Panc1 (cell line): ENCODE measurements at regions of chr5 and their contacts with region 1.

Region 1: GRCh38 chr5:103139264-103139865 is 19.3 kb downstream of the PPIP5K2 start:
- DNase-seq: peak; percentile 39
- ATAC-seq: peak; percentile 98
- H3K4me3 ChIP-seq: no peak overlapping the region
- H3K27ac ChIP-seq: no peak overlapping the region
- H3K4me1 ChIP-seq: no peaks in the 10 kb centered on the region
- H3K27me3 ChIP-seq: no peaks in the 10 kb centered on the region
- CTCF ChIP-seq: peak; percentile 89

Region 2: GRCh38 chr5:102583276-102584124 is 555.9 kb before region 1 on chr5:
- CTCF ChIA-PET with region 1: no interaction called
- POLR2A ChIA-PET with region 1: no interaction called
- in situ Hi-C with region 1: no loop called
- intact Hi-C with region 1: loop called (anchors 10 kb)
- DNase-seq: no peak
- ATAC-seq: no peak
- H3K4me3 ChIP-seq: no peak overlapping the region
- H3K27ac ChIP-seq: no peak overlapping the region
- H3K4me1 ChIP-seq: no peaks in the 10 kb centered on the region
- H3K27me3 ChIP-seq: no peaks in the 10 kb centered on the region
- CTCF ChIP-seq: peak; percentile 45; the same call in 1 of the 2 replicates

Region 3: DNA sequence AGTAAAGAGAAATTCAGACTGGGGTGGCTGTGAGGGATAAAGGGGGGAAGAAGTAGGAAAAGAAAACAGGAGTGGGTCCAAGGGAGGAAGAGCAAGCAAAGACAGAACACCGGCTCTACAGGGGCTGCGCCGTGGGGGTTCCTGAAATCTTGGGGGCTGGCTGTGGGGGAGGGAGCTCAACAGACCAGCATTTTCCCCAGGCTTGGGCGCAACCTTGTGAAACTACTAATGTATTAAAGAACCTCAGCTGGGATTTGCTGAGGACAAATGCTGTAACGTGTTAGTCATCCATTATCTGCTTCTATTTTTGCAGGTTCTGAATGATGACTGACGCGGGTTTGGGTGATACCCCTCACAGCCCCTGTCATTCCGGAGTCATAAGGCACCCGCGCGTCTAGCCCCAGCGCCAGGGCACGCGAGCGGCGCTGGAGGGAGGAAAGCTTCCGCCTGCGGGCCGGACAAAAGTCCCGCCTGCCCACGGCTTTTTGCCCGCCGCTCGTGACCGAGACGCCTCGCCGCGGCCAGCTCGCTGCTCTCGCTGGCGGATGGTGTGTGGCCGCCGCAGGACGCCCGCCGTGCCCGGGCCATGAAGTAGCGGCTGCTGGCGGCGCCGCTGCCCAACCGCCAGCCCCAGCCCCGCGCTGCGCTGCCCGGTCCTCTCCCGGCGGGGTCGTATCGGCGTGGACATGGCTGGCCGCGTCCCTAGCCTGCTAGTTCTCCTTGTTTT is 273.7 kb before region 1 on chr5:
- CTCF ChIA-PET with region 1: no interaction called
- POLR2A ChIA-PET with region 1: no interaction called
- in situ Hi-C with region 1: no loop called
- intact Hi-C with region 1: loop called (anchors 5 kb)
- DNase-seq: no peak
- ATAC-seq: peak; percentile 93
- H3K4me3 ChIP-seq: peak overlapping the region; percentile 76 to 87
- H3K27ac ChIP-seq: peak overlapping the region; percentile 90
- H3K4me1 ChIP-seq: peaks cover 22% of the 10 kb centered on the region
- H3K27me3 ChIP-seq: no peaks in the 10 kb centered on the region
- CTCF ChIP-seq: no peak

Region 4: DNA sequence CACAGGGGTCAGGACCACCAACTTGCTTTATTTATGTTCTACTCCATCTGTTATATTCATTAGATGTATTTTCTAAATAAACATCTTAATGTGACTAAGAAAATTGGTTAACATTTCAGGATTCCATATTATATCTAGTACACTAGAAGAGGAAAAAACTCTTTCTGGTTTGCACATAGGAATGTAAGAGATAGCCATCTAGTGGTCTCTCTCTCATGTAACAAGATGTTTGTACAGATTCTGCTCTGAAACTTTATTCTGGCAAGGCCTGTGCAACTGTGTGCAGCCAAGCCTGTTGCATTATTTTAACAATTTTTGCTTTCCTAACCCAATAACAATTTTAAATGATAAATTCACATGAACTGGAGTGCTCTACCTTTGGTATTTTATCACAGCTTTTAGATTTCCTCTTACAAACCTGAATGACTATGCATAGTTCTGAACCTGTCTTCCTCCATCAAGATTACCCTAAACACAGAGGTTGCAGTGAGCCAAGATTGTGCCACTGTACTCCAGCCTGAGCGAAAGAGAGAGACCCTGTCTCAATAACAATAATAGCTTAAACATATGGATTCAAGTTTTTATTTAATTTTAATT is 167.6 kb before region 1 on chr5:
- CTCF ChIA-PET with region 1: no interaction called
- POLR2A ChIA-PET with region 1: no interaction called
- in situ Hi-C with region 1: no loop called
- intact Hi-C with region 1: loop called (anchors 10 kb)
- DNase-seq: no peak
- ATAC-seq: peak; percentile 90
- H3K4me3 ChIP-seq: no peak overlapping the region
- H3K27ac ChIP-seq: no peak overlapping the region
- H3K4me1 ChIP-seq: no peaks in the 10 kb centered on the region
- H3K27me3 ChIP-seq: no peaks in the 10 kb centered on the region
- CTCF ChIP-seq: peak; percentile 62; the same call in 1 of the 2 replicates